HCT116 (cell line): ENCODE measurements at regions of chr6 and their contacts with region 1.

Region 1: DNA sequence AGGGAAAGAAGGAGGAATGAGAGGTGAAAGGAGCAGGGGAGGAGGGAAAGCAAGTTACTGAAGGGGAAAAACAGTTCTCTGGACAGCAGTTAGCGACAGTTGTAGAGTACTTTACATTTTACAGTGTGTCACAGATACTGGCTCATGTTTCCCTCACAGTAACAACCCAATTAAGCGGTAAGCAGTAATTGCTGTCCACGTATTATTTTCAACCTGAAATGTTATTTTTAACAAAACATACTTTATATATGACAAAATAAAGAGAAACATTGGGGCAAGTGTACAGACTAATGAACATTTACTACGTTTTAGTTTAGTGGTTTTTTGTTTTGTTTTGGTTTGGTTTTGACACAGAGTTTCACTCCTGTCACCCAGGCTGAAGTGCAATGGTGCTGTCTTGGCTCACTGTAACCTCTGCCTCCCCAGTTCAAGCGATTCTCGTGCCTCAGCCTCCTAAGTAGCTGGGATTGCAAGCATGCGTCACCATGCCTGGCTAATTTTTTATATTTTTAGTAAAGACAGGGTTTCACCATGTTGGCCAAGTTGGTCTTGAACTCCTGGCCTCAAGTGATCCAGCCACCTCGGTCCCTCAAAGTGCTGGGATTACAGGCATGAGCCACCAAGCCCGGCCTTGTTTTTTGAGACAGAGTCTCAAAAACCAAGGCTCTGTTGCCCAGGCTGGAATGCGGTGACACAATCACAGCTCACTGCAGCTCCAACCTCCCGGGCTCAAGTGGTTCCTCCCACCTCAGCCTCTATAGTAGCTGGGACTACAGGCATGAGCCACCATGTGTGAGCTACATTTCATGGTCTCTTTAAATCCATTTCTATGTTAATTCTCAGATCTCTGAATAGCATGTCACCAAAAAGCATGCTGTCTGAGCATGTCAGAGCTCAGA is 22.6 kb upstream of the BTN3A2 start:
- DNase-seq: no peak
- ATAC-seq: peak; percentile 33
- H3K4me3 ChIP-seq: peak overlapping the region; percentile 30 to 42
- H3K27ac ChIP-seq: peak overlapping the region; percentile 9; the same call in 1 of the 2 replicates
- H3K4me1 ChIP-seq: peaks cover 13 to 23% of the 10 kb centered on the region in 2 experiments
- H3K27me3 ChIP-seq: no peaks in the 10 kb centered on the region
- CTCF ChIP-seq: no peak
- POLR2A ChIP-seq: no peak
- RAD21 ChIP-seq: 0 out of 2 replicates have a peak, but pooled peaks have one; percentile 10

Region 2: GRCh38 chr6:25981568-25982263 is 360.6 kb before region 1 on chr6:
- CTCF ChIA-PET with region 1: no interaction called
- POLR2A ChIA-PET with region 1: no interaction called
- RAD21 ChIA-PET with region 1: no interaction called
- intact Hi-C with region 1: no loop called
- DNase-seq: no peak
- ATAC-seq: no peak
- H3K4me3 ChIP-seq: no peak overlapping the region
- H3K27ac ChIP-seq: no peak overlapping the region
- H3K4me1 ChIP-seq: no peaks in the 10 kb centered on the region
- H3K27me3 ChIP-seq: no peaks in the 10 kb centered on the region
- CTCF ChIP-seq: no peak
- POLR2A ChIP-seq: no peak
- RAD21 ChIP-seq: no peak

Region 3: DNA sequence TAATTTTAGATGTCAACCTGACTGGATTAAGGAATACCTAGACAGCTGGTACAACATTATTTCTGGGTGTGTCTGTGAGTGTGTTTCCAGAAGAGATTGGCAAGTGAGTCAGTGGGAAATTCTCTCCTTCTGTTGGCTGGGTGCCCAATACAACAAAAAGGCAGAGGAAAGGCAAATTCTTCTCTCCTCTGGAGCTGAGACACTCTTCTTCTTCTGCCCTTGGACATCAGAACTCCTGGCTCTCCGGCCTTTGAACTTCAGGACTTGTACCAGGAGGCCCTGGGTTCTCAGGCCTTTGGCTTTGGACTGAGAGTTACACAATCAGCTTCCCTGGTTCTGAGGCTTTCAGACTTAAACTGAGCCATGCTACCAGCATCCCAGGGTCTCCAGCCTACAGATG is 51.9 kb after region 1 on chr6:
- CTCF ChIA-PET with region 1: no interaction called
- POLR2A ChIA-PET with region 1: no interaction called
- RAD21 ChIA-PET with region 1: no interaction called
- intact Hi-C with region 1: no loop called
- DNase-seq: peak; percentile 46
- ATAC-seq: peak; percentile 61
- H3K4me3 ChIP-seq: no peak overlapping the region
- H3K27ac ChIP-seq: no peak overlapping the region
- H3K4me1 ChIP-seq: peaks cover 9 to 10% of the 10 kb centered on the region in 2 experiments
- H3K27me3 ChIP-seq: no peaks in the 10 kb centered on the region
- CTCF ChIP-seq: no peak
- POLR2A ChIP-seq: no peak
- RAD21 ChIP-seq: no peak

Region 4: GRCh38 chr6:26532699-26533531 is 190.6 kb after region 1 on chr6:
- CTCF ChIA-PET with region 1: interaction called, 7 read pairs
- POLR2A ChIA-PET with region 1: no interaction called
- RAD21 ChIA-PET with region 1: interaction called, 5 to 10 read pairs
- intact Hi-C with region 1: loop called (anchors 2 kb)
- DNase-seq: peak; percentile 83
- ATAC-seq: peak; percentile 57
- H3K4me3 ChIP-seq: peak overlapping the region; percentile 46 to 60
- H3K27ac ChIP-seq: peak overlapping the region; percentile 47
- H3K4me1 ChIP-seq: peaks cover 8 to 26% of the 10 kb centered on the region in 2 experiments; a peak in 3 of 4 replicates
- H3K27me3 ChIP-seq: no peaks in the 10 kb centered on the region
- CTCF ChIP-seq: no peak
- POLR2A ChIP-seq: no peak
- RAD21 ChIP-seq: 0 out of 2 replicates have a peak, but pooled peaks have one; percentile 21

Region 5: DNA sequence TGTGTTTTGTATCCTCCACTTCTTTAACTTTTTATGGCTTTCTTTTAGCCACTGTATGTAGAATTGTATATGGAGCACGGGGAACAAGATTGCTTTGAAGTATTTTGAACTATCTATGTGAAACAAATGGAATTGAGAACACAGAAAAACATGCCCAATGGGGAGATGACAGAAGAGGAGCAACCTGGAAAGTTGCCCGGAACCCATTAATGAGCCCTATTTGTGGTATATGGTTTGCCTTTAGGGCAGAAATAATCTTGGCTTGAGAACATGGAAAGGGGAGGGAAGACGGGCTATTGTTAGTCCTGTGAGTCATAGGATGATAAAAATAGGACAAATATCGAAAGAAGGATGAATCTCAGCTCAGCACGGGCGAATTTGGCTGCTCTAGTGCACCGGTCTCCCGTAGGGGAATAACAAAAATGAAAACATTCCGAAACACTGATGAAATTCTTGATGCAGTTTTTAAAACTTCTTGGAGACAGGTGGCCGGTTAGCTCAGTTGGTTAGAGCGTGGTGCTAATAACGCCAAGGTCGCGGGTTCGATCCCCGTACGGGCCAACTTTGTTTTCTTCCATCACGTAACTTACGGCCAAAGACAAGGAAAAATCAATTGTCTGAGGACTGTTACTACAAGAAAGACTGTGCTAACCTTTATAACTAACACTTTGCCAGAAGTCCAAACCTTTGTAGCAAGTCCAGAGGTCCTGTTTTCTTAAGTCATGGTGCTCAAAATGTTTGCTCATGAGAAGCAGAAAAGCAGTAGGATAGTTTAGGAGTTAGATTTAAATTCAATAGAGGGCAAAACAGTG is 211.5 kb after region 1 on chr6:
- CTCF ChIA-PET with region 1: interaction called, 11 read pairs
- POLR2A ChIA-PET with region 1: no interaction called
- RAD21 ChIA-PET with region 1: no interaction called
- intact Hi-C with region 1: loop called (anchors 5 kb)
- DNase-seq: peak; percentile 81
- ATAC-seq: peak; percentile 58
- H3K4me3 ChIP-seq: peak overlapping the region; percentile 36 to 50
- H3K27ac ChIP-seq: peak overlapping the region; percentile 53
- H3K4me1 ChIP-seq: peaks cover 14 to 45% of the 10 kb centered on the region in 2 experiments
- H3K27me3 ChIP-seq: no peaks in the 10 kb centered on the region
- CTCF ChIP-seq: no peak
- POLR2A ChIP-seq: no peak
- RAD21 ChIP-seq: peak; percentile 9; the same call in 1 of the 2 replicates

Region 6: DNA sequence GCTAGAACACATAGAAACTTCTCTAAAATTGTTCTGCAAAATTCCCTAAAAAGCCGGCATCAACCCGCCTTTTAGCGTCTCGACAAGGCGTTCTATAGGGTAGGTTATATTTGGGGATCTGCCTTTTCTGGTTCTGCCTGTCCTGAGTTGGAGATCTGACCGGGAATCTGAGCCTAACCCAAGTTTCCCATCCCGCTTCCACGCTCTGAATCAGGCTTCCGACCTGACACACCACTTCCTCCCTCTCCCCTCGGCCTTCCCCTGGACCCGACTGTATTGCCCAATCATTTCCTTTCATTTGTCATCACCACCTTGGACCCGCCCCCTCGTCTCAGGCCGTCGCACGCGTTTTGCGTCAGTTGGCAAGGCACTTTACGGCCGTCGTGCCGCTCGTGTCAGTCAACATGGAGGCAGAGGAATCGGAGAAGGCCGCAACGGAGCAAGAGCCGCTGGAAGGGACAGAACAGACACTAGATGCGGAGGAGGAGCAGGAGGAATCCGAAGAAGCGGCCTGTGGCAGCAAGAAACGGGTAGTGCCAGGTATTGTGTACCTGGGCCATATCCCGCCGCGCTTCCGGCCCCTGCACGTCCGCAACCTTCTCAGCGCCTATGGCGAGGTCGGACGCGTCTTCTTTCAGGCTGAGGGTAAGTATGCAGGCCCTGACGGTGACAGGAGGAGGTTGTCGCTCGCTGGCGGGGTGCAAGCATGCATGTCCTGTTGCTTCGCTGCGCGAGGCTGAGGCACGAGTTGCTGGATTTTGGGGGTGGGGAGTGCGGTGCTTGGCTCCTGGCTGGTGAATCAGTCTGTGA is 254.4 kb after region 1 on chr6 and contains the start of gene ABT1:
- CTCF ChIA-PET with region 1: interaction called, 60 read pairs
- POLR2A ChIA-PET with region 1: interaction called, 14 read pairs
- RAD21 ChIA-PET with region 1: interaction called, 12 to 17 read pairs
- intact Hi-C with region 1: loop called (anchors 1 kb)
- DNase-seq: peak; percentile 97
- ATAC-seq: peak; percentile 74
- H3K4me3 ChIP-seq: peak within 1 kb of the TSS; percentile 94 to 98
- H3K27ac ChIP-seq: peak within 1 kb of the TSS; percentile 80
- H3K4me1 ChIP-seq: peaks cover 19 to 43% of the 10 kb centered on the region in 2 experiments
- H3K27me3 ChIP-seq: no peaks in the 10 kb centered on the region
- CTCF ChIP-seq: no peak
- POLR2A ChIP-seq: peak; percentile 80
- RAD21 ChIP-seq: no peak; the same call in 1 of the 2 replicates
- total RNA-seq, gene ABT1: 26.7 TPM